Ascending aorta (tissue), 2 donors: ENCODE measurements at regions of chr15 and their contacts with region 1.

Region 1: DNA sequence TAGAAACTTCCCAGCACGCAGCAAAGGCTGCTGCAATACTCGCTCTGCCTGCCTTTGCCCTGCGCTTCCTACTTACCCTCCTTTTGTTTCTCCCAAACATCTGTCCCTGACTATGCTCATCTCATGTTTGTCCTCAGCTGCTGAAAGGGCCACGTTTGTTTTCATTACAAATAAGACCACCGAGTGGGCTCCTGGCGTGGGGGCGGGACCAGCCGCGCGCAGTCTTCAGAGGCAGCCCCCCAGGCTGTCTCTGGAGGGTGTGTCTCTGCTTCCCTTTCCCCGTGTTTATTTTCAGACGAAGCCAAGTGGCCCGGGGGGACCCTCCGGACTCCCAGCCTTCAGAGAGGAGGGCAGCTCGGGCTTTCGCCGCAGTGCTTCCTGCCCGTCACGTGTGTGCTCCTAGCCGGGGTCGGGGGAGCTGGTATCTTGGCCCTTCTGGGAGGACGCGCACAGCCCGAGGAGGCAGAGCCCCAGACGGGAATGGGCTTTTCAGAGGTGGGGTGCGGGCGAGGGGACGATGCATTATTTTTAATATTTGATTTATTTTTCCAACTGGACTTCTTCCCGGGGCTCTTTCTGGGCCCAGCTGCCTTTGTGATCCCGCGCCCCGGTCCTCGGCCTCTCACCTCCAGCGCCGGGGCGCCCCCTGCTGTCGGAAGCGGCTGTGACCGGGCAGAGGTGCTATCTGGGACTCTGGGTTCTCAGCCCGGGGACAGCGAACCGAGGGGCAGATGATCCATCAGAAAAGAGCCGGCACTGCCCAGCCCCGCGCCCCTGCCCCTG is 70.0 kb upstream of the CGNL1 start:
- DNase-seq: peak; percentile 29 to 91
- H3K4me3 ChIP-seq: peak overlapping the region; percentile 48 to 71
- H3K27ac ChIP-seq: no peak overlapping the region
- H3K4me1 ChIP-seq: peaks cover 0 to 9% of the 10 kb centered on the region in 2 donors
- H3K27me3 ChIP-seq: no peaks in the 10 kb centered on the region
- CTCF ChIP-seq: peak; percentile 86 to 96 (median 88)

Region 2: GRCh38 chr15:56496635-56497034 is 809.7 kb before region 1 on chr15:
- intact Hi-C with region 1: loop called (anchors 5 kb)
- DNase-seq: no peak
- H3K4me3 ChIP-seq: peak overlapping the region in 1 of 2 donors; percentile 44
- H3K27ac ChIP-seq: no peak overlapping the region
- H3K4me1 ChIP-seq: no peaks in the 10 kb centered on the region
- H3K27me3 ChIP-seq: no peaks in the 10 kb centered on the region
- CTCF ChIP-seq: peak; percentile 41 to 72 (median 47)

Region 3: DNA sequence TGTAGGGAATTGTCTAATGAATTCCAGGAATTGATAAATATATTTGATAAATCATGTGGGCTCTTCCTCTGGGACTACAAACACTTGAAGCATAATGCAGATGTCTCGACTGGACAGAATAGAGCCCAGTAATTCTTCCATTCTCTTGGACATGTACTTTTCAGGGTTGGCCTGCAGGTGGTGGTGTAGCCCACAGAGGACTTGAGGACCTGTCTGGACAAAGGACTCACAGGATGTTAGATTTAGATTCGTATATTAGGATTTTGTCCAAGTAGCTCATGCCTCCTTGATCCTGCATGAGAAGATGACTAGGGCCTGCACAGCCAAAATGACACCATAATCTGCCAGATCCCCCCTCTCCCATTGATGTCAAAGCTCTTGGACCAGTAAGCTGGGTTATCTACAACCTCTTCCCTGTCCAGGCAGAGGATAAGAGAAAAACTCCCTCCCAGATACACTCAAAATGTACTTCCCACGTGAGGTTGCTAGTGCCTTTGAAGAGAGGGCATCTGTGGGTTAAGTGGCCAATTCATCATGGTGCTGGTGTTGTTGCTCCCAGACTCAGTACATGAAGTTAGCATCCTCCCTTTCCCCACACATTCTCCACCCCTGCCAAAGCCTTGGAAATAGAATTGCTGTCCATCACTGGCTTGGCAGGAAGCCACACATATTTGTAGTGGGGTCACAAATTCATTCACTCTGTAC is 484.5 kb before region 1 on chr15:
- intact Hi-C with region 1: loop called (anchors 5 kb)
- DNase-seq: no peak
- H3K4me3 ChIP-seq: no peak overlapping the region
- H3K27ac ChIP-seq: no peak overlapping the region
- H3K4me1 ChIP-seq: peaks cover 0 to 4% of the 10 kb centered on the region in 2 donors
- H3K27me3 ChIP-seq: no peaks in the 10 kb centered on the region
- CTCF ChIP-seq: peak; percentile 41 to 62 (median 41)

Region 4: DNA sequence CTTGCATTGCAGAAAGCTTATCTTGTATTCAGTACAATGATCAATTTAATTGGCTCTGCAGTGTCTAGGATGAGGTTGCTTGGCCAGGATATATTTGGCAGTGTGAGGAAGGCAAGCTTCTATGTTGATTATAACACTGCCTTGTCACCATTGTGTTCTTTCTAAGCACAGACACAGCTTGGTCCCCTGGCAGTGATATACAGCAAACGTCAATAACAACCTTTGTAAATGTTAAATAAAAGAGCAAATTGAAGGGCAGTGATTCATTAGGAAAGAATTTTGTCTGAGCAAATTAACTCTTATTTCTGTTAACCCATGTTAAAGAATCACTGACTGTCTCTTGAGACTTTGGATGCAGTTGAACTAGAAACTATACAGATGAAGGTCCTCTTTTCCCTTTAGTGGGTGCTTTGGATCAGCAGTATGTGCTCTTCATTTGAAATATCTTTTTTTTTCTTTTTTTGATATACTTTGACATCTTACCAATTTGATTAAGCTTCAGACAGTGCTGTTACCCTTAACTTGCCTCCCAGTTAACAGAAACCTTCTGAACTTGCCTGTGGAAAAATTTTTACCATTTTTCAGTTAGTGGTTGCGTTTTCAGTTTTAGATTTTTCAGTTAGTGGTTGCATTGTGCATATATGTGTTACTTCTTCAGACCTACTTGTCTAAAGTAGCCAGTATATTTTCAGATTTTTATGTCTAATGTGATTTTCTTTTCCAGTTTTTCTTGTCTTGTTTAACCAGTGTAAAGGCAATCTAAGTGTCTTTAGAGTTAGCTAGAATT is 188.1 kb before region 1 on chr15:
- intact Hi-C with region 1: no loop called
- DNase-seq: no peak
- H3K4me3 ChIP-seq: no peak overlapping the region
- H3K27ac ChIP-seq: no peak overlapping the region
- H3K4me1 ChIP-seq: peaks cover 0 to 10% of the 10 kb centered on the region in 2 donors
- H3K27me3 ChIP-seq: no peaks in the 10 kb centered on the region
- CTCF ChIP-seq: no peak

Region 5: GRCh38 chr15:57213862-57214261 is 92.5 kb before region 1 on chr15:
- intact Hi-C with region 1: loop called (anchors 5 kb)
- DNase-seq: no peak
- H3K4me3 ChIP-seq: no peak overlapping the region
- H3K27ac ChIP-seq: no peak overlapping the region
- H3K4me1 ChIP-seq: peaks cover 0 to 11% of the 10 kb centered on the region in 2 donors
- H3K27me3 ChIP-seq: no peaks in the 10 kb centered on the region
- CTCF ChIP-seq: peak in 2 of 3 experiments; percentile 38 to 49